ENCODE measurements at regions of chr11 and their contacts with region 1.

Region 1: GRCh38 chr11:125329786-125330185 is 165.2 kb downstream of the PKNOX2 start:
- DNase-seq: peak in 1 of 10 donors; percentile 31
- H3K4me3 ChIP-seq: no peak overlapping the region
- H3K27ac ChIP-seq: peak overlapping the region in 56 of 59 donors; percentile 4 to 87 (median 70)
- H3K27me3 ChIP-seq: no peaks in the 10 kb centered on the region
- CTCF ChIP-seq: no peak

Region 2: GRCh38 chr11:125382314-125382791 is 52.6 kb after region 1 on chr11:
- intact Hi-C with region 1: loop called in 1 of 2 experiments (anchors 10 kb)
- DNase-seq: no peak
- H3K4me3 ChIP-seq: no peak overlapping the region
- H3K27ac ChIP-seq: peak overlapping the region in 53 of 59 donors; percentile 8 to 87 (median 66)
- H3K27me3 ChIP-seq: no peaks in the 10 kb centered on the region
- CTCF ChIP-seq: no peak